Right ventricle myocardium superior (tissue), 1 donor: ENCODE measurements at regions of chr6 and their contacts with region 1.

Region 1: DNA sequence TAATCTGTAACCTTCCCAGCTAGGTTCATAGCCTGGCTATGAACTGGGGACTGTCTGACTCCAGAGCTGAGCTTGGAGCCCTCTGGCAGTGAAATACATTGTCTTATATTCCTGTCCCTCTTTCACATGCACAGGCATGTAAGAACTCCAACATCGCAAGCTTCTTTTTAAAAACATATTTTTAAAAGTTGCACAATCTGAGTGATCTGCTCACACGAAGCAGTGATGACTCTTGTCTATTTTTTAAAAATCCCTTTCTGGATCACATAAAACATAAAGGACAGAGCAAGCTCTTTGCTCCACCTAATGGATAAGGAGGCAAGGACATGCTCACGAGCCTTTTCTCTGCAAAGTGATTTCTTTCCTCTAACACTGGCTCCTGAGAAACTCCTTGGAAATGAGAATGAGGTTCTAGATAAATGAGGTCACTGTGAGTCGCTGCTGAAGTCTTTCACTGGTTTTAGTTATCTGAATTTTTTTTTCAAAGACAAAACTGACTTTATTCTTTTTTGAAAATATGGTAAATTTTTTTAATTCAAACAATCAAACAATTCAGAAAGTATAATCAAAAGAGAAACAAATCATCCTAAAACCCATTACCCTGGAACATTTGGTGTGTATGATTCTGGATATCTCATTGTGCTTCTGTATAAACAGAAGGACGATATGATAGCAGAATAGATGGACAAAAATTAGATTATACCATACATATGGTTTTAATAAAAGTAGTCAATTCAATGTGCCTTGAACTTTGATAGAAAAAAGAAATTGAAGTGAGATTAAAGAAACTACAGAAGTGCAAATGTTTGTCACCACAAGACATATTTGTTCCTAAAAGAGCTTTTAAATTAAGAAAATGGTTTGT is 30.8 kb downstream of the IL20RA start:
- DNase-seq: no peak
- ATAC-seq: peak; percentile 86

Region 2: DNA sequence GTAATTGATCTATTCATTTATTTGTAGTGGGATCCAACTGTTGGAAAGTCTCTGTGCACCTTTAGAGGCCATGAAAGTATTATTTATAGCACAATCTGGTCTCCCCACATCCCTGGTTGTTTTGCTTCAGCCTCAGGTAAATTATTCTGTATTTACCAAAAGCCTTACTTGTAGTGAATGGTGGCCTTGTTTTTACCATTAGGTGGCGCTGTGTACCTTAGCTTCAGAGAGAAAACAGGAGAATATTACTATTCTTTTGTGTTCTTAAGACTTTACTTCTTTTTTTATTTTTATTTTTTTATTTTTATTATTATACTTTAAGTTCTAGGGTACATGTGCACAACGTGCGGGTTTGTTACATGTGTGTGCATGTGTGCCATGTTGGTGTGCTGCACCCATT is 167.9 kb before region 1 on chr6:
- intact Hi-C with region 1: loop called (anchors 10 kb)
- DNase-seq: no peak
- ATAC-seq: peak; percentile 64

Region 3: DNA sequence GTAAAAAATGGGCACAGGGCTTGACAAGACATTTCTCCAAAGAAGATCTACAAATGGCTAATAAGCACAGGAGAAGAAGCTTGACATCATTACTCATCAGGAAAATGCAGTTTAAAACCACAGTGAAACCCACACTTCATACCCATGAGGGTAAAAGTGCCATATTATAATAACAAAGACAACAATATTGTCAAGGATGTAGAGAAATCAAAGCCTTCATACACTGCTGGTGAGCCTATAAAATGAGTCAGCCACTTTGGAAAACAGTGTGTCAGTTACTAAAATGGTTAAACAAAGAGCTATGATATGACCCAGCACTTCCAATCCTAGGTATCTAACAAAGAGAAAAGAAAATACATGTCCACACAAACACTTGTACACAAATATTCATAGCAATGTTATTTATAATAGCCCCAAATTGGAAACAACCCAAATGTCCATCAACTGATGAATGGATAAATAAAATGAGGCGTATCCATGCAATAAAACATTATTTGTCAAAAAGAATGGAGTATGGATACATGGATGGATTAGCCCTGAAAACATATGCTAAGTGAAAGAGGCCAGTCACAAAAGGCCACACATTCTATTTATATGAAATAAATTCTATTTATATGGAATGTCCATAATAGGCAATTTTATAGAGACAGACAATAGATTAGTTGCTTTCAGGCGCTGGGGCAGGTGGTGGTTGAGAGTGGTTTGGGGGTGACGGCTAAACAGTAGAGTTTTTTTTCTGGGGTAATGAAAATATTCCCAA is 42.3 kb after region 1 on chr6:
- intact Hi-C with region 1: no loop called
- DNase-seq: no peak
- ATAC-seq: no peak

Region 4: DNA sequence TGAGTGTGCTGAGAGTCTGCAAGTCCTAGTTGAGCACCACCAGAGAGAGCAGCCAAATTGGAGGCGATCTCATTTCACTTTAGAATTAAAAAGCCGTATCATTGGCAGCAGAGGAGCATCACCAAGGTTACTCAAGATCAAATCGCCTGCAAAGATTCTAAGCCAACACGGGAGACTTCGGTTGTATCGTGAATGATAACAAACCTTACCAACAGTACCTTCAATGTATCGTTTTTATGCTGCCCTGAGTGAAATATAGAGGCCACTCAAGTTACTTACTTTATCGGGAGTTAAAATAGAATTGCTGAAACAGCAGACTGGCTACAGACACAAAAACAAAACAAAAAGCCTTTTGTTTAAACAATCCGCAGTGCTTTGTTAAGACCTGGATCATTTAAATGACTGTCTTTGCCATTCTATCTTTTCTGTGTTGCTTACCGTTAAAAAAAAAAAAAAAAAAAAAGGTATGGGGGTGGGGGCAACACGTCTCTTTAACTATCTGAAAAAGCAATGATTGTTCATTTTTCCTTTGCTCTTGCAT is 1471.1 kb after region 1 on chr6:
- intact Hi-C with region 1: no loop called
- DNase-seq: no peak
- ATAC-seq: peak; percentile 58